Calu3 (cell line): ENCODE measurements at regions of chr3 and their contacts with region 1.

Region 1: DNA sequence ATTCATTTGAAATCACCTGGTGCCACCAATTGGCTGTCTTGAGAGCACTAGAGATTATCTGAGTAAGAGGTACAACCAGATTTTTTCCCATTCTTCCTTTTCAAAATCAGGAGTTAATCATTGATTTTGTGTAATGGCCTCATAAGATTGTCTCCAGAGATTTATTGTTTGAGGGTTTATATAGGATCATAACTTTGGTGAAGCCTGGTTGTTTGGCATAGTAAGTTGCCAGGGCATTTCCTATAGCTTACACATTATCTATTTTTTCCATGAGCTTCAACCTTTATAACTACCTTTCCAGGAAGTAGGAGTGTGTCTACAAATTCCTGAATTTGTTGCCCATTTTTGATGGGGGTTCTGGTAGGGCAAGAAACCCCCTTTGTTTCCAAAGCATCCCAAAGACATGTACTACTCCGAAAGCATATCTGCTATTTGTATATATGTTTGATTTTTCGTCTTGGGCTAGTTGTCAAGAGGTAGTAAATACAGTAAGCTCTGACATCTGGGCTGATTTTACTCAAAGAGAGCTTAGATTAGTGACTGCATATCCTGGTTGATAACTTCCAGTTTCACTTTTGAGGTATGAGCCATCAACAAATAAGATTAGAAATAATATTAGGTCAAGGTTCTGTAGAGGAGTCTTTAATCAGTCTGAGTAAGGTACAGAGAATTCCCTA is 11.7 kb upstream of the PRR23B start:
- DNase-seq: no peak
- H3K4me3 Mint-ChIP-seq: no peak overlapping the region
- H3K27ac Mint-ChIP-seq: no peak overlapping the region
- H3K4me1 Mint-ChIP-seq: peaks cover 8% of the 10 kb centered on the region
- H3K27me3 Mint-ChIP-seq: no peaks in the 10 kb centered on the region
- CTCF ChIP-seq: no peak

Region 2: GRCh38 chr3:138941259-138941885 is 91.1 kb before region 1 on chr3:
- CTCF ChIA-PET with region 1: interaction called, 4 read pairs
- intact Hi-C with region 1: loop called (anchors 5 kb)
- DNase-seq: peak; percentile 91
- H3K4me3 Mint-ChIP-seq: no peak overlapping the region
- H3K27ac Mint-ChIP-seq: no peak overlapping the region
- H3K4me1 Mint-ChIP-seq: peaks cover 31% of the 10 kb centered on the region
- H3K27me3 Mint-ChIP-seq: peaks cover 94% of the 10 kb centered on the region
- CTCF ChIP-seq: peak; percentile 93

Region 3: GRCh38 chr3:139044366-139045210 is 12.1 kb after region 1 on chr3 and contains the start of gene PRR23C:
- CTCF ChIA-PET with region 1: no interaction called
- intact Hi-C with region 1: no loop called
- DNase-seq: no peak
- H3K4me3 Mint-ChIP-seq: no peak within 1 kb of the TSS
- H3K27ac Mint-ChIP-seq: no peak within 1 kb of the TSS
- H3K4me1 Mint-ChIP-seq: no peaks in the 10 kb centered on the region
- H3K27me3 Mint-ChIP-seq: no peaks in the 10 kb centered on the region
- CTCF ChIP-seq: peak; percentile 23
- total RNA-seq, gene PRR23C: not detected in 2 replicates